Right ventricle myocardium inferior (tissue), 1 donor: ENCODE measurements at regions of chr2 and their contacts with region 1.

Region 1: DNA sequence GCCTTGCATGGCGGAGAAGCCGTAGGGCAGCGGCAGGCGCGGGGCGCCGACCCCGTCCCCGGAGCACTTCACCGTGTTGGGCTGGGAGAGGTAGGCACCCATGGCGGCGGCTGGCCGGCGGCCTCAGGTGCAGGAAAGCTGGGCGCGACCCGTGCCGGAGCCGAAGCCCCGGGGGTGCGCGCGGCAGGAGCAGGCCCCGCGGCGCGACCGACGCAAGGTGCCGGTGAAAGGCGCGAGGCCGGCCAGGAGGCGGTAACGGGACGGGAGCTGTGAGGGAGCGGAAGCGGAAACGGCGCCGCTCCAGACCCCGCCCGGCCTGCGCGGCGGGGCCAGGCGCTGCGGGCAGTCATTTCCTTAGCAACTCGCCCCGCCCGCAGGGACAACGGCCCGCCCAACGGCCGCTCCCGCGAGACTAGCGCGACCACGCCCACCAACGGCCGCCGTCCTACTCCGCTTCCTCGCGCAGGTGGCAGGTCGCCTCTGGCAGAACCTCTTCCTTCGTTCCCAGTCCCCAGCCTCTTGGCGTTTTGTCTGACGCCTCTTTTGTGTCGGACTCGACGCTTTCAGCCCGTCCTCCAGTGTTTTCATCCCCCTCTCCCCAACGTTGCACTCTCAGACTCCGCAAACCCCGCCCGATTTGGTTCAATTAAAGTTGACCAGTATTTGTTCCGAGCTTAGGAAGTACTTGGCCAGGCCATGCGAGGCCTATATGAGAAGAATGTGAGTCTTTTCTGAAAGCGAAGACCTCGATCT is at the start of gene PPM1G:
- DNase-seq: peak; percentile 97
- ATAC-seq: peak; percentile 100
- total RNA-seq, gene PPM1G: 35.6 TPM

Region 2: GRCh38 chr2:26442707-26443106 is 966.8 kb before region 1 on chr2:
- intact Hi-C with region 1: no loop called
- DNase-seq: no peak
- ATAC-seq: no peak

Region 3: DNA sequence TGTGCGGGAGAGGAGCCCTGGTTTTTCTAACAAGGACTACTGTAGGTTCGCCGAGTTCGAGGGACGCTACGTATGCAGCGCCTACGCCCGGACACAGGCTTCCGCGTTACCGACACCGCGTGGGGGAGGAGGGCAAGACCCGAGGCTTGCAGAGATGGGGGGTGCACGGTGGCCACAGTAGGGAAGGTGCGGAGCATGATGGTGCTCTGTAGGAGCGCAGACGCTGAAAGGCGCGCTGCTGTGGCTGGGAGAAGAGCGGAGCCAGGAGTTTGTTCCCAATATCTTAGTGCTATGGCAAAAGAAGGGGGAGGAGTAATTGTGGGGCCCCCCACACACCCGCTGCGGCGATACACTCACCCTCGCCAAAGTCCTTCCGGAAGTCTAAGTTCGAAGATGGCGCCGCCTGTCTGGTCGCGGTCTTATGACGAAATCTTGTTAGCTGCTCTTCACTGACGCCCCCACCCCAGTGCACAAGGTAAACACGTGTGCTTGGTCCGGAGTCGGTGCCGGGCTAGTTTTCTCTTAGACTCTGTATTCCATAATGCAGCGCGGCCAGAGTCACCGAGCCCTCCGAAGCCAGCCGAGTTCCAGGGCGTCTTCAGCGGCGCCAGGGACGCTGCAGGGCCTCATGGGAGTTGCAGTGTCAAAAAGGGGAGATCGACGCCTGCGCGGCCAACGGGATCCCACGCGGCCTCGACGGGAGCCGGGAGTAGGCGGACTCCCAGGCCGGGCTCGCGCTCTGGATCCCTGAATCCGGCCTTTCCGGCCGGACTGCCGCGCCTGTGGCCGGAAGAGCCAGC is 52.9 kb before region 1 on chr2 and contains the start of gene GTF3C2:
- intact Hi-C with region 1: loop called (anchors 2 kb)
- DNase-seq: peak; percentile 97
- ATAC-seq: peak; percentile 97
- total RNA-seq, gene GTF3C2: 17.3 TPM

Region 4: DNA sequence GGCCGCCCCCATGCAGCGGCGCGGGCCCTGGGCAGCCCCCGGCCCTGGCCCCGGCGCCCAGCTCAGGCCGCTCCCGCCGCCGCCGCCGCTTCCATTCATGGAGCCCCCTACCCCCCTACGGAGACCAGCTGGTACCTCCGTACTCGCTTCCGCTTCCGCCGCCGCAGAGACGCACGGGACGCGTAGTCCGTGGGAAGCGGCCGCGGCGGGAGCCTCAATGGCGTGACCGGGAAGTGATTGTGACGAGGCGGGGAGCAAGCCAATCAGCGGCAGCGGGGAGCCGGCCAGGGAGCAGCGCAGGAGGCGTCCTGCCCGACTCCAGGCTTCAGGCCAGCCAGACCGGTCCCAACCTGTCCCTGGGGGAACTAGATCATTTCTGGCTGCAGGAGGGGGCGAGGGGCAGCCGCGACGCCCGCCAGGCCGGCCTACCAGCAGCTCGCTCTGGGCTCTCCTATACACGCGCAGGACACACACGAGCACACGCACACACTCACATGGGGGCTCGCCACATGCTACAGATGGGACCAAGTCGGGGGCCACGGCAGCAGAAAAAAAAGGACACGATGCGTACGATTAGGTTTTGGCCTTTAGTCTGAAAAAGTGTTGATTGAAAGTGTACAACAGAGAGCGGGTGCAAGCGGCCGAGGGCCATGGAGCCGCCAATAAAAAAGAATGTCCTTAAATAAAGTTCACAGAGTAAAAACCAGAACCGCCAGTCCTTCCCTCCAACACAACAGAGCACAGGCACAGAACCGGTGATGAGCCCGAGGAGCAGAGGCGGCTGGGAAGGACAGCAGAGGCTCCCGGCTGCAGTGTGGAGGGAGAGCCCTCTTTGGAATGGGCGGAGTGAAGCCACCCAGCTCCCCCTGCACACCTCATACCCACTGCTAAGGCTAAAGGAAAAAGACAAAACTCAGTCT is 28.6 kb before region 1 on chr2 and contains the start of gene ZNF513:
- intact Hi-C with region 1: loop called (anchors 2 kb)
- DNase-seq: peak; percentile 99
- ATAC-seq: peak; percentile 94
- total RNA-seq, gene ZNF513: 6.8 TPM

Region 5: DNA sequence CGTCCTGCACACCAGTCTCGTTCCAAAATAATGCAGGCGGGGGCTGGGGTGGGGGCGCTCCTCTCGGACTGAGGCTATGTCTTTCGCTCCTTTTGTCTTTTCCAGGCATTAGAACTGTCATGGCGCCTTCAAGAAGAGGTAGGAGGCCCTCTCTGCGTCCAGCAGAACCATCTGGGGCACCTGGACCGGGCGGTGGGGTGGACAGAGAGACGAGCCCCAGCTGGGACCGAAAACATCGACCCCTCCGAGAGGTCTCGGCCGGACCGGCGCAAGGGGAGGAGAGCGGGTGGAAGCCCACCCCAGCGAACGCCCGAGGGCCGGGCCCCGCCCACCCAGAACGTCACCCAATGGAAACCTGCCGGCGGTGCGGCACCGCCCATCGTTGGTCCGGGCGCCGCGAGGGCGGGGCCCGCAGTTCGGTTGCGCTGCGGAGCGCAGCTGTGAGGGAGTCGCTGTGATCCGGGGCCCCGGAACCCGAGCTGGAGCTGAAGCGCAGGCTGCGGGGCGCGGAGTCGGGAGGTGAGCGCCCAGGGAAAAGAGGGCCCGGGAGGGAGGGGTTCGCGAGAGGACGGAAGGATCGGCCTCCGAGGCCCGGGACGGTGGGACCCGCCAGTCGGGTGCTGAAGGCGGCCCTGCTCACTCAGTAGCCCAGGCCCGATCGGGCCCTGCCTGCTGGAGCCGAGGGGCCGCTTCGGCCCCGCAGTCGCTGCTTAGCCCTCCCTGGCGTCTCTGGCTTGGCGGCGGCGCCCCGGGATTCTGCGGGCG is 18.9 kb after region 1 on chr2 and contains the start of gene NRBP1:
- intact Hi-C with region 1: loop called (anchors 2 kb)
- DNase-seq: peak; percentile 96
- ATAC-seq: peak; percentile 98
- total RNA-seq, gene NRBP1: 58.4 TPM

Region 6: GRCh38 chr2:27489498-27490397 is 80.3 kb after region 1 on chr2 and contains the start of gene IFT172:
- intact Hi-C with region 1: loop called (anchors 5 kb)
- DNase-seq: peak; percentile 99
- ATAC-seq: peak; percentile 99
- total RNA-seq, gene IFT172: 19.3 TPM